Adrenal gland (tissue), 19 donors: ENCODE measurements at regions of chrX and their contacts with region 1.

Region 1: GRCh38 chrX:118644378-118644777 is 83.0 kb upstream of the IL13RA1 start:
- DNase-seq: peak in 1 of 7 donors; percentile 4
- H3K4me3 ChIP-seq: no peak overlapping the region
- H3K27ac ChIP-seq: no peak overlapping the region
- H3K4me1 ChIP-seq: no peaks in the 10 kb centered on the region
- H3K27me3 ChIP-seq: no peaks in the 10 kb centered on the region
- CTCF ChIP-seq: peak; percentile 26 to 68 (median 56)
- POLR2A ChIP-seq: no peak

Region 2: DNA sequence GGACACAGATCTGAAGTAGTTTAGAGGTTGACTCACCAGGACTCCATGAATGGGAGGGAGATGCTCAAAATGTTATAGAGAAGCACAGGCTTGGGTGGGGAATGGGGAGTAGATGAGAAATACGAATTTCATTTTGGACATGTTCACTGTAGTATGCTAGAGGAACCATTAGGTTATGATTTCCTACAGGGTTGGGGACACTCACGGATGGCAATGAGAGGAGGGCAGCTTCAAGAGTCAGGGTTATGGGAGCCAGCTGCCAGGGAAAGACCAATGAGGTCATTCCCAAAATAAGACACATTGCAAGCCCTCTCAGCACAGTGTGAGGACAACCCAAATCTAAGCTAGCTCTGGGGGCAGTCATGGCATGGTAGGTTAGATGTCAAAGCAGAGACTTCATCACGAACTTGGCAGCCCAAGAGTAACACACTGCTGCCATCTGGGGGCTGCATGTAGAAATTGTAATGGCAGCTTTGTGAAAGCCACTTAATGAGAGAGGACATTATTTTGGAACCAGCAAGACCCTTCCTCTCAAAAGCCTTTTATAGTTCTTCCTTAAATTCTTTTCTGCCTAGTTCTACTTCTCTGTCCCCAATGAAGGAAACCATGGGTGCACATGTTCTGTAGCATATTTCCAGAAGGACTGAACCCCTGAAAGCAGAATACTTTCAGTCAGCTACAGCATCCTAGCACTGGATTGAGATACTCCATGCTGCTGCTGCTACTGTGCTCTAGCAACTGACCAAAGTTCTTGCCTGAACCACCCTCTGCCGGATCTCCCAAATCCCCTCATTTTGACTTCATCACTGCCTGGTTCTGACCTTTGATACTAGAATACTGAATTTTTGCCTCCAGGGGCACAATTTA is 163.0 kb after region 1 on chrX:
- intact Hi-C with region 1: loop called (anchors 5 to 10 kb)
- DNase-seq: peak; percentile 25 to 64 (median 35)
- H3K4me3 ChIP-seq: no peak overlapping the region
- H3K27ac ChIP-seq: no peak overlapping the region
- H3K4me1 ChIP-seq: no peaks in the 10 kb centered on the region
- H3K27me3 ChIP-seq: peaks cover 8% of the 10 kb centered on the region
- CTCF ChIP-seq: peak; percentile 51 to 81 (median 73)
- POLR2A ChIP-seq: no peak

Region 3: DNA sequence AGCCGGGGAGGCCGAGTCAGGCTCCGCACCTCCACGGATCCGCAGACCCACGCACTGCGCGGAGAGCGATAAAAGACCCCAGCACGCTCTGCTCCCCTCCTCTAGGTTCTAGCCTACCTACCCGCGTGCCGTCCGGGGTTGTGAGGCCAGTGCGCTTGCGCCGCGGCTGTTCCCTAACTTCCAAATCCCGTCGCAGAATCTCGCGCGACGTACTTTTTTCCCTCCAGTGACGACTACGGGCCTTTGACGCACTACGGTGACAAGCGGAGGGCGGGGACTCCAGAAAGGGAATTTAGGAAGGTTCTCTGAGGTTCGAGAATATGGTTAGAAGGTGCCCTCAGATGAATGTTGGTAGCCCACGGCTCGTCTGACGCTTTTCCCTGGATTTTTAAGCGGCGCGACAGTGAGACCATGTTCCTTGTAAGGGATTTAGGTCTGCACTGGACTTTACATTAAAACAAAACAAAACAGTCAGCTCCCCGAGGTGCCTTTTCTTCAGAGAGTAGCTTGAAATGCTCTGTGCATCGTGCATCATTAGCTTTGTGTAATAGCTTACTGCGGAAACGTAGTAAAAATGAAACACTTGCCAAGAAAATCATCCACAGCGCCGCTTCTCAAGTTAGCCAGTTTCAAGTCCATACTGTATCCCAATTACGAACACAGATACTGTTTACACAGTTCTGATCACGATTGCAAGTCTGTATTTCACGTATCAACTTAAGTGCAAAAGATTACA is 962.1 kb after region 1 on chrX and contains the start of gene NKRF:
- intact Hi-C with region 1: no loop called
- DNase-seq: peak; percentile 91 to 98 (median 94)
- H3K4me3 ChIP-seq: peak within 1 kb of the TSS; percentile 40 to 60 (median 57)
- H3K27ac ChIP-seq: peak within 1 kb of the TSS; percentile 55 to 95 (median 91)
- H3K4me1 ChIP-seq: no peaks in the 10 kb centered on the region
- H3K27me3 ChIP-seq: no peaks in the 10 kb centered on the region
- CTCF ChIP-seq: peak in 1 of 6 experiments; percentile 3
- POLR2A ChIP-seq: peak; percentile 71 to 87
- total RNA-seq, gene NKRF: 4.2 to 12.8 (median 5.7) TPM